SK-N-SH (cell line): ENCODE measurements at regions of chr1 and their contacts with region 1.

Region 1: GRCh38 chr1:3564921-3565827 is 46.1 kb downstream of the MEGF6 start:
- DNase-seq: peak; percentile 93
- H3K4me3 ChIP-seq: peak overlapping the region in 1 of 2 experiments; percentile 52; a peak in 1 of 4 replicates
- H3K27ac ChIP-seq: no peak overlapping the region; a peak in 1 of 4 replicates
- H3K4me1 ChIP-seq: peaks cover 0 to 45% of the 10 kb centered on the region in 2 experiments; a peak in 1 of 4 replicates
- H3K27me3 ChIP-seq: no peaks in the 10 kb centered on the region
- CTCF ChIP-seq: peak; percentile 71
- EP300 ChIP-seq: no peak
- RAD21 ChIP-seq: peak; percentile 88

Region 2: GRCh38 chr1:3518256-3518655 is 46.9 kb before region 1 on chr1:
- CTCF ChIA-PET with region 1: interaction called, 16 read pairs
- POLR2A ChIA-PET with region 1: no interaction called
- DNase-seq: no peak
- H3K4me3 ChIP-seq: no peak overlapping the region; a peak in 1 of 4 replicates
- H3K27ac ChIP-seq: peak overlapping the region in 1 of 2 experiments; percentile 93; a peak in 2 of 4 replicates
- H3K4me1 ChIP-seq: peaks cover 0 to 56% of the 10 kb centered on the region in 2 experiments; a peak in 1 of 4 replicates
- H3K27me3 ChIP-seq: no peaks in the 10 kb centered on the region
- CTCF ChIP-seq: peak; percentile 59
- EP300 ChIP-seq: no peak
- RAD21 ChIP-seq: no peak

Region 3: GRCh38 chr1:3553166-3553939 is 11.8 kb before region 1 on chr1:
- CTCF ChIA-PET with region 1: interaction called, 76 read pairs
- POLR2A ChIA-PET with region 1: interaction called, 3 read pairs
- DNase-seq: peak; percentile 76
- H3K4me3 ChIP-seq: no peak overlapping the region
- H3K27ac ChIP-seq: no peak overlapping the region; a peak in 1 of 4 replicates
- H3K4me1 ChIP-seq: peaks cover 0 to 58% of the 10 kb centered on the region in 2 experiments; a peak in 1 of 4 replicates
- H3K27me3 ChIP-seq: no peaks in the 10 kb centered on the region
- CTCF ChIP-seq: no peak
- EP300 ChIP-seq: no peak
- RAD21 ChIP-seq: no peak

Region 4: GRCh38 chr1:3611170-3612019 is 46.2 kb after region 1 on chr1 and contains the start of gene MEGF6:
- CTCF ChIA-PET with region 1: interaction called, 21 read pairs
- POLR2A ChIA-PET with region 1: no interaction called
- DNase-seq: peak; percentile 99
- H3K4me3 ChIP-seq: peak within 1 kb of the TSS; percentile 26 to 54; a peak in 2 of 4 replicates
- H3K27ac ChIP-seq: no peak within 1 kb of the TSS
- H3K4me1 ChIP-seq: peaks cover 0 to 38% of the 10 kb centered on the region in 2 experiments; a peak in 2 of 4 replicates
- H3K27me3 ChIP-seq: no peaks in the 10 kb centered on the region
- CTCF ChIP-seq: no peak
- EP300 ChIP-seq: no peak
- RAD21 ChIP-seq: no peak
- polyA plus RNA-seq, gene MEGF6: 5.8 and 7.6 TPM in 2 replicates

Region 5: GRCh38 chr1:3631330-3632262 is 66.4 kb after region 1 on chr1:
- CTCF ChIA-PET with region 1: interaction called, 10 read pairs
- POLR2A ChIA-PET with region 1: no interaction called
- DNase-seq: no peak
- H3K4me3 ChIP-seq: no peak overlapping the region
- H3K27ac ChIP-seq: no peak overlapping the region; a peak in 1 of 4 replicates
- H3K4me1 ChIP-seq: peaks cover 0 to 19% of the 10 kb centered on the region in 2 experiments; a peak in 2 of 4 replicates
- H3K27me3 ChIP-seq: no peaks in the 10 kb centered on the region
- CTCF ChIP-seq: no peak
- EP300 ChIP-seq: no peak
- RAD21 ChIP-seq: no peak